Posterior vena cava (tissue), 2 donors: ENCODE measurements at regions of chr7 and their contacts with region 1.

Region 1: DNA sequence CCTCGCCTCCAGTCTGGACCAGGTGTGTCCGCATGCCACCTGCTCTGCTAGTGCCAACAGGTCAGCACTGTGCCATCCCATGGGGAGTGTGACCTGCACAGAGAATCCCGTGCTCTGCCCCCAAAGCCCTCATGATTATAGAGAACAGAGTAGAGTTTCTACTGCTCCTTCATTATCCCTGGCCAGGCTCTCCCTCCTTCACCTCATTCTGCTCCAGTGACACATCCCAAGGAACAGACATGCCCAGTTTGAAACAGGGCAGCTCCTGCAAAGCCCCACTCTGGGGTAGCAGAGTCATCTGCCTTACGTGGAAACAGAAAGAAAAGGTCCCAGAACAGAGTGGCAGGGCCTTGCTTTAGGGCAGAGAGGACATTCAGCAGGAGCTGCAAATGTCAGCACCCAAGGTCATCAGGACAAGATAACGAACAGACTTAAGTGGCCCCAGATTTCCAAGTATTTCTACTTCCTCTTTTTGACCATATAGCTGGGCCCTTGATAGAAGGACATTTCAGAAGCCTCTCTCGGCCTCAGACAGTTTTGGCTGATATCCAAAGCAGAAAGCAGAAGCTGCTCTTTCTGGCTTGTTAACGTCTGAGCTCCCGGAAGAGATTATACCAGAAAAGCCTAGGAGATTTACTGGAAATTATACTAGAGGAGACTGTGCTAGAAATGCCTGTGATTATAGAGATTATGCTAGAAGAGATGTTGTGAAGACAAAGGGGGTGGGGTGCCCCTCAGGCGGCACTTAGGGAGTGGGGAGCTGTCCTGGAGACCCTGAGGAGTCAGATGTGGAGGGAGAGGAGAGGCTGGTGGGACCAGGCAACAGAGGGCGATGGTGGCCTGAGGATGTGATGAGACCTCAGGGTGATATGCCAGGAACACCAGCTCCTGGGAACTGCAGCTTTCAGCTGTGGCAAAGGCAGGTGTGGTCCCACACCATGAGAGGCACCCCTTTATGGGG is 12.6 kb downstream of the TMEM176B start:
- DNase-seq: no peak

Region 2: DNA sequence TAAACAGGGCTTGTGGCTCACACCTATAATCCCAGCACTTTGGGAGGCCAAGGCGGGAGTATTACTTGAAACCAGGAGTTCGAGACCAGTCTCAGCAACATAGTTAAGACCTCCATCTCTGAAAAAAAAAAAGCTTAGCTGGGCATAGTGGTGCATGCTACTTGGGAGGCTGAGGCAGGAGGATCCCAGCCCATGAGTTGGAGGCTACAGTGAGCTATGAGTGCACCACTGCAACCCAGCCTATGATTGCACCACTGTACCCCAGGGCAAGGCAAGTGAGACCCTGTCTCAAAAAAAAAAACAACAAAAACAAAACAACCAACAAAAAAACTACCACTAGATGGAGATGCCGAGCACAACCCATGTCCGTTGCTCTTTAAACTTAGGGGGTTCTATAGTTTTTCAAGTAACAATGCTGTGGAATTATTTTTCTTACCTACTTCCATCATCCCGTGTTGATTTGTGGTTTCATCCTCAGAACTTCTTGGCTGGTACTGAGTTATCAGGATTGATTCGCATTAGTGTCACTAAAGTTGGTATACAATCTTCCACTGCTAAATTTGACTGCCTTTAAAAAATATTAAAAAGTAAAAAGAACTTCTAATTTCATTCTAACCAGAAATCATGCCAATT is 431.2 kb before region 1 on chr7:
- intact Hi-C with region 1: no loop called
- DNase-seq: no peak

Region 3: GRCh38 chr7:150803161-150803860 is 15.7 kb after region 1 on chr7:
- intact Hi-C with region 1: loop called in 1 of 2 experiments (anchors 2 kb)
- DNase-seq: no peak

Region 4: GRCh38 chr7:150988230-150989226 is 200.9 kb after region 1 on chr7:
- intact Hi-C with region 1: loop called in 1 of 2 experiments (anchors 10 kb)
- DNase-seq: peak; percentile 89